Activated B cell treated with CpG ODN at 0.5 μM for 24 hours (primary cell): ENCODE measurements at regions of chr9 and their contacts with region 1.

Region 1: DNA sequence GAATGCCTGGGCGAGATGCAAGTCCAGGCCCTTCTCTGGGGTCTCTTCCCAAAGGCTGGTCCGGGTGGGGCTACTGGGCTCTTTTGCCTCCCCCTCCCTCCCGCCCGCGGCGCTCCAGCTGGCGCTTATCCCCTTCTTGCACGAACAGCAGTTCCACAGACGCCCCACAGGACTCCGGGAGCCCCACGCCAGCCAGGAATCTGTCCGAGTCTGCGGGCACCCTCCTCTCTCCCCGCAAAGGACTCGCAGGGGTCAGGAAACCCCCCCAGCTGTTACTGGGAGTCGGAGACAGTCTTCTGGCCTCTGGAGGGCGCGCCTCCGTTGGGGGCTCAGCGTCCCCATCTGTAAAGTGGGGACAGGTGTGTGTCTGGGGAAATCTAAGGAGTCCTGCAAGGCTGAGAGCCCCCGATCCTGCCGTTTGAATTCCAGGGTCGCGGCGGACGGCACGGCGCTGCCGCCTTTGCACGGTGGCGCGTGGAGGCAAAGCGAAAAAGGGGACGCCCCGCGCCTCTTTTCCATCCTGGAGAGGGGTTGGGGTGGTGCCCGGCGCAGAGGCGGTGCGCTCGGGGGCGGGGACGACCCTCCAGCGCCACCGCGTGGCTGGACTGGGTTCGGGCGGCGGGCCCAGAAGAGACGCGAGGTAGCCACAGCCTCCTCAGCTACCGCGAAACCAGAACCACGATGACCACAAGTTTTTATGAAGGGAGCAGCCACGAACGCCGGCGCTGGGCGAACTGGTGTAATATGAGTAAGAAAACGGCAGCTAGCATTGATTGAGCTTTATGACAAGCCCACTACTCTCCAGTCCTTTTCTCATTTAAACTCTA is 2.9 kb upstream of the CCIN start:
- DNase-seq: peak; percentile 89
- ATAC-seq: peak; percentile 99
- H3K4me3 Mint-ChIP-seq: peak overlapping the region; percentile 79
- H3K27ac Mint-ChIP-seq: no peak overlapping the region
- H3K4me1 Mint-ChIP-seq: peaks cover 7% of the 10 kb centered on the region
- H3K27me3 Mint-ChIP-seq: peaks cover 1% of the 10 kb centered on the region
- CTCF ChIP-seq: peak; percentile 90

Region 2: GRCh38 chr9:35954942-35955546 is 211.3 kb before region 1 on chr9:
- CTCF ChIA-PET with region 1: interaction called, 3 read pairs
- POLR2A ChIA-PET with region 1: no interaction called
- intact Hi-C with region 1: loop called (anchors 1 kb)
- DNase-seq: no peak
- ATAC-seq: peak; percentile 75
- H3K4me3 Mint-ChIP-seq: no peak overlapping the region
- H3K27ac Mint-ChIP-seq: no peak overlapping the region
- H3K4me1 Mint-ChIP-seq: no peaks in the 10 kb centered on the region
- H3K27me3 Mint-ChIP-seq: peaks cover 22% of the 10 kb centered on the region
- CTCF ChIP-seq: peak; percentile 86

Region 3: DNA sequence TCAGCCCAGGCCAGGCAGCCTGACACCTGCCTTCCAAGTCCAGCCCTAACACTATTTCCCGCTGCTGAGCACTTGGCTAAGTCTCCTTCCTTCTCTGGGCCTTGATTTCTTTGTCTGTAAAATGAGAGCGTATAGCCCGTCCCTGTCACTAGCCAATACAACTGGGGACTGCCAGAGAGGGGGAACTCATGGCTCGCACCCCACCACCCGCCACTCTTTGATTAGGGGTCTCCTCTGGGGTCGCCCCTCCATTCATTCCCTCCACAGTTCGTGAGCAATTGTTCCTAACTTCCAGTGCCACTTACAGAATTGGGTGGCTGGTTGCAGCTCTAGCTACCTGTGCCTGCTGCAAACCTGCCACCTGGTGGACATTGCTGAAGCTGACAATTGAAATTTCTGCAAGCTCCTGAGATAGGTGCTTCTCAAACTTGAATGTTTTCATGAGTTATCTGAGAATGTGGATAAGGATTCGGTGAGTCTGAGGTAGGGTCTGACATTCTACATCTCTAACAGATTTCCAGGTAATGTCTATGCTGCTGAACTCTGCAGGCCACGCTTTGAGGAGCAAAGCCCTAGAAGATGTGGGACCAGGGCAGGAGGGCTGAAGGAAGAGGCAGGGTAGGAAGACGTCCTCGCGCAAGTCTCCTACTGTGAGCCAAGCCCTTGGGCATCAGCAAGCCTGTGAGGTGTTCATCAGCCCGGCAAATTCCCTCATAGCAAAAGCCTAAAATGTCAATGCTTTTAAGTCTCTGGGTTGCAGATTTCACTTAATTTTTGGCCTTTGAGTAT is 142.9 kb before region 1 on chr9:
- CTCF ChIA-PET with region 1: interaction called, 6 read pairs
- POLR2A ChIA-PET with region 1: interaction called, 3 read pairs
- intact Hi-C with region 1: loop called (anchors 2 kb)
- DNase-seq: peak; percentile 44
- ATAC-seq: peak; percentile 79
- H3K4me3 Mint-ChIP-seq: no peak overlapping the region
- H3K27ac Mint-ChIP-seq: no peak overlapping the region
- H3K4me1 Mint-ChIP-seq: no peaks in the 10 kb centered on the region
- H3K27me3 Mint-ChIP-seq: peaks cover 6% of the 10 kb centered on the region
- CTCF ChIP-seq: peak; percentile 85

Region 4: DNA sequence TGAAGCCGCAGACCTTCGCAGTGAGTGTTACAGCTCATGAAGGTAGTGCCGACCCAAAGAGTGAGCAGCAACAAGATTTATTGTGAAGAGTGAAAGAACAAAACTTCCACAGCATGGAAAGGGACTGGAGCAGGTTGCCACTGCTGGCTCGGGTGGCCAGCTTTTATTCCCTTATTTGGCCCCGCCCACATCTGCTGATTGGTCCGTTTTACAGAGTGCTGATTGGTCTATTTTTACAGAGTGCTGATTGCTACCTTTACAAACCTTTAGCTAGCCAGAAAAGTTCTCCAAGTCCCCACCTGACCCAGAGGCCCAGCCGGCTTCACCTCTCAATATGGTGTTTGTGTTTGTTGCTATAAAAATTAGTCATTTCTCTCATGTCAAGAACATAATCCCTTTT is 79.9 kb before region 1 on chr9:
- CTCF ChIA-PET with region 1: no interaction called
- POLR2A ChIA-PET with region 1: no interaction called
- intact Hi-C with region 1: no loop called
- DNase-seq: no peak
- ATAC-seq: no peak
- H3K4me3 Mint-ChIP-seq: no peak overlapping the region
- H3K27ac Mint-ChIP-seq: no peak overlapping the region
- H3K4me1 Mint-ChIP-seq: peaks cover under 1% of the 10 kb centered on the region
- H3K27me3 Mint-ChIP-seq: no peaks in the 10 kb centered on the region
- CTCF ChIP-seq: no peak

Region 5: DNA sequence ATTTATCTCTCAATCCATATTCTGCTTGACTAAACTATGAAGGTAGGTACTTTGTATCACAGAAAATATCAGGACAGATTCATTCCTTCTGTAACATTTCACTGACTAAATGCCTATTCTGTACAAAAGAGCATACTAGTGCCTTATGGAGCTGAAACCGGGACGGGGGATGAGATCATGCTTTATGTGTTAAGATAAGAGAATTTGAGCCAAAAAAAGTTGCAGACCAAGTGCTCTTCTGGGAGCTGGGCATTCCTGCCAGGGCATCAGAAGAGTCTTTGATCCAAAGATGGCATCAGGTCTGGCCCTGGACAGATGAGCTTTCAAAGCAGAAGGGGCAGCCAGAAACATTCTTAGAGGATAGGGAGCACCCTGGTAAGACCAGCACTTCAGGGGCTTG is 57.2 kb before region 1 on chr9:
- CTCF ChIA-PET with region 1: interaction called, 299 read pairs
- POLR2A ChIA-PET with region 1: interaction called, 5 read pairs
- intact Hi-C with region 1: no loop called
- DNase-seq: no peak
- ATAC-seq: no peak
- H3K4me3 Mint-ChIP-seq: no peak overlapping the region
- H3K27ac Mint-ChIP-seq: no peak overlapping the region
- H3K4me1 Mint-ChIP-seq: no peaks in the 10 kb centered on the region
- H3K27me3 Mint-ChIP-seq: no peaks in the 10 kb centered on the region
- CTCF ChIP-seq: no peak

Region 6: GRCh38 chr9:36136272-36136893 is 29.9 kb before region 1 on chr9 and contains the start of gene GLIPR2:
- CTCF ChIA-PET with region 1: interaction called, 10 read pairs
- POLR2A ChIA-PET with region 1: interaction called, 5 read pairs
- intact Hi-C with region 1: loop called (anchors 1 kb)
- DNase-seq: peak; percentile 79
- ATAC-seq: peak; percentile 98
- H3K4me3 Mint-ChIP-seq: peak within 1 kb of the TSS; percentile 87
- H3K27ac Mint-ChIP-seq: peak within 1 kb of the TSS; percentile 88
- H3K4me1 Mint-ChIP-seq: peaks cover 53% of the 10 kb centered on the region
- H3K27me3 Mint-ChIP-seq: no peaks in the 10 kb centered on the region
- CTCF ChIP-seq: no peak
- total RNA-seq, gene GLIPR2: 13.6 and 14.3 TPM in 2 replicates

Region 7: GRCh38 chr9:36148311-36149051 is 17.8 kb before region 1 on chr9:
- CTCF ChIA-PET with region 1: interaction called, 19 read pairs
- POLR2A ChIA-PET with region 1: interaction called, 7 read pairs
- intact Hi-C with region 1: loop called (anchors 1 kb)
- DNase-seq: no peak
- ATAC-seq: no peak
- H3K4me3 Mint-ChIP-seq: no peak overlapping the region
- H3K27ac Mint-ChIP-seq: no peak overlapping the region
- H3K4me1 Mint-ChIP-seq: peaks cover 81% of the 10 kb centered on the region
- H3K27me3 Mint-ChIP-seq: no peaks in the 10 kb centered on the region
- CTCF ChIP-seq: no peak